Thyroid gland (tissue), 4 donors: ENCODE measurements at regions of chr17 and their contacts with region 1.

Region 1: DNA sequence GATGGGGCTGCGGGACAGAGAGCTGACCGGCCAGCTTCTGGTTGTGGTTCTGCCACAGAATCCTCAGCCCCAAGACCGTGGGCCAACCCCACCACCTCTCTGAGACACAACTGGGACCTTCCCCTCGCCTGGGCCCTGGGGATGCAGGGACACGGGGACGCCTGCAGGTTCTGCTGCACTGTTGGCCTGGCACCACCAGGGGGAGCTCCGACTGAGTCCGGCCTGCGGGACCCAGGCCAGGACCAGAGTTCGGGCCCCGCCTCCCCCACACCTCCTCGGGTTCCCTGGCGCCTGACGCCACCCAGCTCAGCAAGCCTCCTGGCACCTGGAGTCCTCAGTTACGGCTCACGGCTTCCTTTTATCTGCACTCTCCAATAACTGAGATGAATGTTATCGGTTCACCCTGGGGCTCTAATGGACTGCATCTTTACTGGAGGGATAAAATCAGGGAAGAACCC is 27.3 kb downstream of the TBC1D16 start:
- DNase-seq: peak; percentile 94
- H3K4me3 ChIP-seq: no peak overlapping the region
- H3K27ac ChIP-seq: peak overlapping the region in 1 of 3 donors; percentile 56
- H3K4me1 ChIP-seq: peaks cover 8 to 25% of the 10 kb centered on the region in 2 donors
- H3K27me3 ChIP-seq: no peaks in the 10 kb centered on the region
- CTCF ChIP-seq: peak; percentile 83 to 98 (median 94)
- POLR2A ChIP-seq: no peak

Region 2: GRCh38 chr17:80031691-80032430 is 23.4 kb after region 1 on chr17:
- intact Hi-C with region 1: loop called (anchors 2 kb)
- DNase-seq: no peak
- H3K4me3 ChIP-seq: no peak overlapping the region
- H3K27ac ChIP-seq: no peak overlapping the region
- H3K4me1 ChIP-seq: peaks cover 51 to 56% of the 10 kb centered on the region in 2 donors
- H3K27me3 ChIP-seq: no peaks in the 10 kb centered on the region
- CTCF ChIP-seq: no peak
- POLR2A ChIP-seq: no peak

Region 3: GRCh38 chr17:80082403-80083135 is 74.2 kb after region 1 on chr17:
- intact Hi-C with region 1: loop called (anchors 5 kb)
- DNase-seq: peak; percentile 69 to 72
- H3K4me3 ChIP-seq: no peak overlapping the region
- H3K27ac ChIP-seq: no peak overlapping the region
- H3K4me1 ChIP-seq: peaks cover 6 to 9% of the 10 kb centered on the region in 2 donors
- H3K27me3 ChIP-seq: no peaks in the 10 kb centered on the region
- CTCF ChIP-seq: peak; percentile 42 to 89 (median 63)
- POLR2A ChIP-seq: no peak

Region 4: DNA sequence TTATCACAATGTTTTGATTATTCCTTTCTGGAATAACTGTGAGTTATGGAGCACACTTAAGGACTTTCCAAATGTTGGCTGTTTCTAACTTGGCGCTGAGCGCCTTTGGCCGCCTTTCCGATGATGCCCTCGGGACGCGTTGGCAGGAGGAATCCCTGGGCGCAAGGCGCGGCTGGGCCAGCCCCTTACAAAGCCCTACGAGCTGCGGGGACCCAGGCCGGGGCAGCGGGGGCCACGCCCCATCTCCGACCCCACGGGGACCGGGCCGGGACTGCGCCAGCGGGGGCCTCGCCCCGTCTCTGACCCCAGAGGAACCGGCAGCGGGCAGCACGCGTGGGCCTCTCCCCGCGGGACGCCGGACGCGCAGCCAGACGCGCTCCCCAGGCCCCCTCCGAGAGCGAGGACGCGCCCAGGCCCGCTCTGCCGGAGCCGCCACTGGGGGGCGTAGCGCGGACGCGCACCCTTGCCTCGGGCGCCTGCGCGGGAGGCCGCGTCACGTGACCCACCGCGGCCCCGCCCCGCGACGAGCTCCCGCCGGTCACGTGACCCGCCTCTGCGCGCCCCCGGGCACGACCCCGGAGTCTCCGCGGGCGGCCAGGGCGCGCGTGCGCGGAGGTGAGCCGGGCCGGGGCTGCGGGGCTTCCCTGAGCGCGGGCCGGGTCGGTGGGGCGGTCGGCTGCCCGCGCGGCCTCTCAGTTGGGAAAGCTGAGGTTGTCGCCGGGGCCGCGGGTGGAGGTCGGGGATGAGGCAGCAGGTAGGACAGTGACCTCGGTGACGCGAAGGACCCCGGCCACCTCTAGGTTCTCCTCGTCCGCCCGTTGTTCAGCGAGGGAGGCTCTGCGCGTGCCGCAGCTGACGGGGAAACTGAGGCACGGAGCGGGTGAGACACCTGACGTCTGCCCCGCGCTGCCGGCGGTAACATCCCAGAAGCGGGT is 92.9 kb after region 1 on chr17 and contains the start of gene GAA:
- intact Hi-C with region 1: loop called (anchors 5 kb)
- DNase-seq: peak; percentile 81 to 86
- H3K4me3 ChIP-seq: peak within 1 kb of the TSS; percentile 45 to 93 (median 66)
- H3K27ac ChIP-seq: peak within 1 kb of the TSS; percentile 78 to 90 (median 90)
- H3K4me1 ChIP-seq: peaks cover 10 to 20% of the 10 kb centered on the region in 2 donors
- H3K27me3 ChIP-seq: no peaks in the 10 kb centered on the region
- CTCF ChIP-seq: peak in 5 of 6 experiments; percentile 29 to 96 (median 94)
- POLR2A ChIP-seq: peak in 1 of 2 donors; percentile 71
- total RNA-seq, gene GAA: 42.1 to 131 (median 83.2) TPM

Region 5: GRCh38 chr17:80263253-80264204 is 255.1 kb after region 1 on chr17:
- intact Hi-C with region 1: no loop called
- DNase-seq: peak; percentile 56 to 59
- H3K4me3 ChIP-seq: peak overlapping the region in 1 of 3 donors; percentile 15
- H3K27ac ChIP-seq: peak overlapping the region; percentile 34 to 99 (median 98)
- H3K4me1 ChIP-seq: peaks cover 19 to 39% of the 10 kb centered on the region in 2 donors
- H3K27me3 ChIP-seq: no peaks in the 10 kb centered on the region
- CTCF ChIP-seq: no peak
- POLR2A ChIP-seq: no peak